Common myeloid progenitor, CD34-positive (primary cell): ENCODE measurements at regions of chr4 and their contacts with region 1.

Region 1: DNA sequence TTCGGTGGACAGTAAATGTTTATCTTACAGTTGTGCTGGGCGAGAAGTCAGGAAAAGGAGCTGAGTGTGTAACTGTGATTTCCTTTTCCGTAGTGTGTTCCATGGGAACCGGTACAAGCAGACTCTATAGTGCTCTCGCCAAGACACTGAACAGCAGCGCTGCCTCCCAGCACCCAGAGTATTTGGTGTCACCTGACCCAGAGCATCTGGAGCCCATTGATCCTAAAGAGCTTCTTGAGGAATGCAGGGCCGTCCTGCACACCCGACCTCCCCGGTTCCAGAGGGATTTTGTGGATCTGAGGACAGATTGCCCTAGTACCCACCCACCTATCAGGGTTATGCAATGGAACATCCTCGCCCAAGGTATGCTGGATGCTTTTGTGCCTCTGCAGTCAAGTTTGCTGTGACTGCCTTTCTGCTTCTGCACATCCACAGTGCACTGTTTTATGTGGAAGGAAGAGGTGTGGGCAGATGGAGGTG is 27.4 kb downstream of the NOCT start:
- DNase-seq: no peak
- H3K4me3 ChIP-seq: no peak overlapping the region
- H3K27ac ChIP-seq: no peak overlapping the region
- H3K4me1 ChIP-seq: peaks cover 0 to 2% (median 0%) of the 10 kb centered on the region in 4 experiments
- H3K27me3 ChIP-seq: no peaks in the 10 kb centered on the region

Region 2: GRCh38 chr4:138902705-138903104 is 140.3 kb before region 1 on chr4:
- CTCF ChIA-PET with region 1: no interaction called
- POLR2A ChIA-PET with region 1: no interaction called
- DNase-seq: peak in 1 of 3 donors; percentile 31
- H3K4me3 ChIP-seq: no peak overlapping the region
- H3K27ac ChIP-seq: no peak overlapping the region
- H3K4me1 ChIP-seq: no peaks in the 10 kb centered on the region
- H3K27me3 ChIP-seq: no peaks in the 10 kb centered on the region

Region 3: DNA sequence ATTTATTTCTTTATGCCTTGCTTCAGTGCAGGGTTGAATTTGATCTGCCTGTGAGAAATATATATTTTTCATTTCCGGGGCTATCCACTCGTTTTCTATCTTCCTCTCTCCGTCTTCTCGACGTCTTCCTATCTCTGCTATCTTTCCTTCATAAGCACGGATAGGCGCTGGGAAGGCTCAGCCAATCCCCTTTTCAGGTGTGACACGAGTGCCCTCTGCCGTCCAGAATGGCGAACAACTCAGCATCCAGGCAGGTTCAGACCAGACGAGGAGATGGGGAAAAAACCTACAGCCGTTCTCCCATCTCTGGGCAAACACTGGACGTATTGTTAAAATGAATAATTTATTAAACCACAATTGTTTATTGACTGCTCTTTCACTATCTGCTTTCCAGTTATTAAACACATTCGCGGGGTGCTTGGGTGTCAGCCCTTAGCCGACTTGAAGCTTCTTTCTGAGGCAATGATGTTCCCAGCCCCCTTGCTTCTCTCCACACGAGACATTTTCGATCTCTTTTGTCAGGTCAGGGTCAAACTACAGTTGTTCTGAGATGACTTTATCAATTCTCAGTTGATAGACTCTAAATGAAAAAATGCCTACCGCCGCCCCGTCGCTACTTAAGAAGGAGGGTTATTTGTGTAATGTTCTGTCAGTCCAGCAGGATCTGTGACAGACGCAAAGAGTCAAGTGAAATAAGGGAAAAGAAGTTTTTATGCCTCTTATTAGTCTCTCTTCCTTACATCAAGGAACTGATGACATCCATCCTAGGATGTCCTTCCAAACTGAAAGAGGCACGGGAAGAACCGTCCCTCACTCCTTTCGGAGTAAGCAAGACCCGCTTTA is 123.7 kb before region 1 on chr4:
- CTCF ChIA-PET with region 1: no interaction called
- POLR2A ChIA-PET with region 1: no interaction called
- DNase-seq: peak; percentile 19 to 51 (median 39)
- H3K4me3 ChIP-seq: no peak overlapping the region
- H3K27ac ChIP-seq: no peak overlapping the region
- H3K4me1 ChIP-seq: no peaks in the 10 kb centered on the region
- H3K27me3 ChIP-seq: peaks cover 0 to 4% (median 0%) of the 10 kb centered on the region in 5 experiments

Region 4: GRCh38 chr4:139054791-139055376 is 11.9 kb after region 1 on chr4:
- CTCF ChIA-PET with region 1: interaction called, 10 read pairs
- POLR2A ChIA-PET with region 1: interaction called, 4 read pairs
- DNase-seq: no peak
- H3K4me3 ChIP-seq: no peak overlapping the region
- H3K27ac ChIP-seq: no peak overlapping the region
- H3K4me1 ChIP-seq: no peaks in the 10 kb centered on the region
- H3K27me3 ChIP-seq: no peaks in the 10 kb centered on the region

Region 5: DNA sequence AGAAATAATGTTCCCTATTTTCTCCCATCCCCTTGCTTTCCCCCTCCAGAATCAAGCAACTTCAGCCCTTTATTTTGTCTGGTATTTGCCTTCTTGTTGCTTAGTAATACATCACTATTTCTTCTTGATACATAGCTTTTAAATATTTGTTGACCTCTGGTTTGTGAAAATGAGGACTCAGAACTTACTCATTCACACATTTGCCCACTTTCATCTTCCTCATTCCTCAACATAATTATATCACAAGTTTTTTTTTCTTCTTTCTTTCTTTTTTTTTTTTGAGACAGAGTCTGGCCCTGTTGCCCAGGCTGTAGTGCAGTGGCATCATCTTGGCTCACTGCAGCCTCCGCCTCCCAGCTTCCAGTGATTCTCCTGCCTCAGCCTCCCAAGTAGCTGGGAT is 288.2 kb after region 1 on chr4:
- CTCF ChIA-PET with region 1: no interaction called
- POLR2A ChIA-PET with region 1: no interaction called
- DNase-seq: peak in 2 of 3 donors; percentile 26 to 36
- H3K4me3 ChIP-seq: no peak overlapping the region
- H3K27ac ChIP-seq: no peak overlapping the region
- H3K4me1 ChIP-seq: peaks cover 0 to 5% (median 0%) of the 10 kb centered on the region in 4 experiments
- H3K27me3 ChIP-seq: no peaks in the 10 kb centered on the region